ENCODE measurements at regions of chr12 and their contacts with region 1.

Region 1: GRCh38 chr12:122336015-122336946 is 70.0 kb upstream of the VPS33A start:
- DNase-seq: peak; percentile 37
- H3K27ac ChIP-seq: no peak overlapping the region
- CTCF ChIP-seq: peak; percentile 80

Region 2: DNA sequence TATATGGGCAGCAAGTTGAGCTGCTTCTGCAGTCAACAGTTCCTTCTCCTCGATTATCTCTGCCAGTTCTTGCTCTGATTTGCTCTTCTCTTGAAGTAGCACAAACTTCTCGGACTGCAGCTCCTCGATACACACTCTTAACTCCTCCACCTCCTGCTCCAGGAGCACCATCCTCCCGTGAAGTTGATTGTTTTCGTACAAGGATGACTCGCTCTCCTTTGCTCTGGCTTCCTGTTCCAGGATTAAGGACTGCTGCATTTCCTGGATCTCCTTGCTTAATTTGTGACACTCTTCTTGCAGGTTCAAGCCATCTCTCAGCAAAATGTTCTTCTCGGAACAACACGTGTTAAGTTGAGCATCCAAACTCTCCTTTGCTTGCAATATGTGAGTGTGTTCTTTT is 13.8 kb before region 1 on chr12:
- CTCF ChIA-PET with region 1: interaction called, 12 read pairs
- POLR2A ChIA-PET with region 1: no interaction called
- DNase-seq: no peak
- H3K27ac ChIP-seq: no peak overlapping the region
- CTCF ChIP-seq: no peak

Measured in RWPE1 (cell line).